Posterior vena cava (tissue), 2 donors: ENCODE measurements at regions of chr17 and their contacts with region 1.

Region 1: DNA sequence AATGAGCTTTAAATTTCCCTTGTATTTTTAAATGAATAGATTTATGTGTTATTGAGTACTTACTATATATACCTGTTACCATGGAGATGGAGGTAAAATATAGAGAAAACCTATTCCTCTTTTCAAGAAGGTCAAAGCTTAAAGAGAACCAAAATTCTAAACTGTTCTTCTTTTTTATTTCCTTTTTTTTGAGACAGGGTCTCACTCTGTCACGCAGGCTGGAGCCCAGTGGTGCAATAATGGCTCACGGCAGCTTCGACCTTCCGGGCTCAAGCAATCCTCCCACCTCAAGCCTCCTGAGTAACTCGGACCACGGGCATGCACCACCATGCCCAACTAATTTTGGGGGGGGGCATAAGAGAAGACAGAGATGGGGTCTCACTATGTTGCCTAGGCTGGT is 25.0 kb upstream of the TMEM97 start:
- DNase-seq: no peak

Region 2: GRCh38 chr17:27939474-27940465 is 354.2 kb before region 1 on chr17:
- intact Hi-C with region 1: no loop called
- DNase-seq: no peak

Region 3: DNA sequence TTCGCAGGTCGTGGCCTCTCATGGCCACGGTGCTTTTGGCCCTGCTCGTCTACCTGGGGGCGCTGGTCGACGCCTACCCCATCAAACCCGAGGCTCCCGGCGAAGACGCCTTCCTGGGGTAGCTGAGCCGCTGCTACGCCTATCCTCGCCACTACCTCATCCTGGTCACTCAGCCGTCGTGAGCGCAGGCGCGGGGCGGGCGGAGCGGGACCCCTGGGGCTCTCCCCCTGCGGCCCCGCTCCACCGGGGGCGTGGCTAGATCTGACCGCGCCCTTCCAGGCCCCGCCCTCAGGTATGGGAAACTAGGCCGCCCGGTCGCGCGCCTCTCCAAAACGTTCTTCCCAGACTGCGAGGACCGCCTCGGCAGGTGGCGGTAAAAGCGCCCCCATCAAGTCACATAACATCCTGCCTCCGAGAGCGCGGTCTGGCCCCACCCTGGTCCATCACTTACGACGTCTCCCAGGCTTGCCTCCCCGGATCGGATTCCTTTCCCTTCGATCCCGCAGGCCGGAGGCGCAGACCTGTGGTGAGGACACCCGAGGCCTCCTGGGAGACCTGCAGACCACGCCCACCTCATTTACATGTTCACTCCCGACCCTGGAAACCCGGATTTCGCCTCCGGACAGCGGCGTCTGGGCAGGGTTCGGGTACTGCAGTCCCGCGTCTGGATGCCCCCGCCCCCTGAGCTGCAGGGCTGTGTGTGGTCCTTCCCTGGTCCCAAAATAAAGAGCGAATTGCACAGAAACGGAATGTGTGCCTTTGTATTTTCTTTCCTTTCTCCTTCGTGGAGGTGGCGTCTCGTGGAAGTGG is 66.5 kb before region 1 on chr17:
- intact Hi-C with region 1: loop called in 1 of 2 experiments (anchors 5 kb)
- DNase-seq: peak; percentile 78

Region 4: DNA sequence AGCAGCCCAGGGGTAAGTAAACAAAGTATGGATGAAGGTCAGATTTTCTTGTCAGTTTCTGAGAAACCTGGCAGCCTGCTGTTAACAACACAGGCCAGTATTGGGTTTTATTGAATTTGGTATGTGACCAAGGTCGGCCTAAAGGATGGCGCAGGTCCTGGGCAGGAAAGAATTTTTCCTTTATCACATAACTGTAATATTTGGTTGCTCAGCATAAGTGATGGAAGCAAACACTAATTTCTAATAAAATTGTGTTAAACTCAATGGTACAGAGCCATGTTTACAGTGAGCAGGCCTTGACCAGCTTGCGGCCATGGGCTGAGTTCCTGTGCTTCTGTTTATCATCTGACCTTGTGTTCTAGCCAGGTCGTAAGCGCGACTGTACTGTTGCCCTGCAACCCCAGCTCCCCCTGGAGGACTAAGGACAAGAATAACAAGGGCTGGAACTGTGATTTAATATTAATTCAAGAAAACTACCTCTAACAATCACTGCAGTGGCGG is 52.8 kb after region 1 on chr17:
- intact Hi-C with region 1: no loop called
- DNase-seq: peak; percentile 79